ENCODE measurements at regions of chr15 and their contacts with region 1.

Region 1: GRCh38 chr15:35379972-35380371 is 166.0 kb downstream of the DPH6 start:
- DNase-seq: no peak
- ATAC-seq: no peak
- H3K4me3 ChIP-seq: no peak overlapping the region
- H3K4me1 ChIP-seq: no peaks in the 10 kb centered on the region
- CTCF ChIP-seq: no peak

Region 2: GRCh38 chr15:35306361-35306981 is 73.5 kb before region 1 on chr15:
- intact Hi-C with region 1: loop called in 1 of 2 experiments (anchors 10 kb)
- DNase-seq: peak in 1 of 3 donors; percentile 72
- ATAC-seq: peak; percentile 92
- H3K4me3 ChIP-seq: no peak overlapping the region
- H3K4me1 ChIP-seq: peaks cover 24% of the 10 kb centered on the region
- CTCF ChIP-seq: no peak

Measured in mucosa of descending colon (tissue), 3 donors.